ENCODE measurements at regions of chr7 and their contacts with region 1.

Region 1: DNA sequence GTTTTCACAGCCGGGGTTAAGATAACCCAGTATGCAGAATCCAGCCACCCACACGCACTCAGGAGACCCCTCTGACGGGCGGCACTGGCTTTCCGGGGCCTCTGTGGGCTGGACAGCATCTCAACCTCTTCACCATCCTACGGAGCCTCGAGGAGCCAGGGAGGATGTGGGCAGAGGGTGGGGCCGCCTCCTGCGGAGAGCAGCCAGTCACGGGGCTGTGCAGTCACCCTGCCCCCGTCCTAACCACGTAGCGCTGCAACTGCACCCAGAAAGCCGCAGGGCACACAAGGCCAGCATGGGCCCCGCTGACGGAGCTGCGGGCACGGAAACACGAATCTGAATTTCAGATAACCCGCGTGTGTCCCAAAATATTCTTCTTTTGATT is 270.3 kb downstream of the ELFN1 start:
- DNase-seq: peak; percentile 96
- H3K4me3 Mint-ChIP-seq: peak overlapping the region; percentile 84
- H3K27ac Mint-ChIP-seq: peak overlapping the region; percentile 96
- H3K4me1 Mint-ChIP-seq: peaks cover 55% of the 10 kb centered on the region
- H3K27me3 Mint-ChIP-seq: no peaks in the 10 kb centered on the region

Region 2: GRCh38 chr7:1925349-1925748 is 15.0 kb before region 1 on chr7:
- CTCF ChIA-PET with region 1: interaction called, 3 read pairs
- POLR2A ChIA-PET with region 1: interaction called, 10 read pairs
- intact Hi-C with region 1: loop called (anchors 1 kb)
- DNase-seq: peak; percentile 29
- H3K4me3 Mint-ChIP-seq: no peak overlapping the region
- H3K27ac Mint-ChIP-seq: no peak overlapping the region
- H3K4me1 Mint-ChIP-seq: peaks cover 70% of the 10 kb centered on the region
- H3K27me3 Mint-ChIP-seq: peaks cover 3% of the 10 kb centered on the region

Region 3: DNA sequence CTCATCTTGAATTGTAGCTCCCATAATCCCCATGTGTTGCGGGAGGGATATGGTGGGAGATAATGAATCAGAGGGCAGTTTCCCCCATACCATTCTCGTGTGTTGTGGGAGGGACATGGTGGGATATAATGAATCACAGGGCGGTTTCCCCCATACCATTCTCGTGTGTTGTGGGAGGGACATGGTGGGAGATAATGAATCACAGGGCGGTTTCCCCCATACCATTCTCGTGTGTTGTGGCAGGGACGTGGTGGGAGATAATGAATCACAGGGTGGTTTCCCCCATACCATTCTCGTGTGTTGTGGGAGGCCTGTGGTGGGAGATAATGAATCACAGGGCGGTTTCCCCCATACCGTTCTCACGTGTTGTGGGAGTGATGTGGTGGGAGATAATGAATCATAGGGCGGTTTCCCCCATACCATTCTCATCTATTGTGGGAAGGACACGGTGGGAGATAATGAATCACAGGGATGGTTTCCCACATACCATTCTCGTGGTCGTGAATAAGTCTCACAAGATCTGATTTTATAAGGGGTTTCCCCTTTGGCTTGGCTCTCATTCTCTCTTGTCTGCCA is 21.4 kb after region 1 on chr7:
- CTCF ChIA-PET with region 1: no interaction called
- POLR2A ChIA-PET with region 1: no interaction called
- intact Hi-C with region 1: loop called (anchors 1 kb)
- DNase-seq: peak; percentile 80
- H3K4me3 Mint-ChIP-seq: peak overlapping the region; percentile 43
- H3K27ac Mint-ChIP-seq: peak overlapping the region; percentile 84
- H3K4me1 Mint-ChIP-seq: peaks cover 5% of the 10 kb centered on the region
- H3K27me3 Mint-ChIP-seq: no peaks in the 10 kb centered on the region

Region 4: DNA sequence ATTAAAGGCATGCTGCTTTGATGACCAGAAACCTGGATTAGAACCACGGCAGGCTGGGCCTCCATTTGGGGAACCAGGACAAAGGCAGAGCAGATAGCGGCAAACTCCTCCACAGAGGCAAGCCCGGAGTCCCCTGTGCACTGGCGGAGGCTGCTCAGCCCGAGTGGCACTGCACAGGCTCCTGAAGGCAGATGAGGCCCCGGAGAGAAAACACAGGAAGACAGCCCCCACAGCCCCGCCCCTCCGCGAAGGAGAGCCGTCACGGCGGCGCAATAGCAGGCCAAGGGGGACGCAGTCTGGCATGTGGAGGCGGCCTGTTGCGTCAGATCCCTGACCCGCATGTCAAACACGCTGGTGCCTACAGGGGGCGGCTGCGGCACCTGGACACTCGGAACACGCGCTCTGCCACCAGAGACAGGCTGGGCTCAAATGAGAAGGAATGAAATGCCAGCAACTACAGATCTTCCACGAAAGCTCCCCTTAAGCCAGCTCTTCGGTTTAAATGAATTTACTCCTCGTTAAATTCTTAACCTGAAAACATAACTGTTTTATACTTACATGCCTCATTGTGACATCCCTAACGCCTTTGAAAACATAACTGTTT is 163.8 kb after region 1 on chr7:
- CTCF ChIA-PET with region 1: no interaction called
- POLR2A ChIA-PET with region 1: no interaction called
- intact Hi-C with region 1: no loop called
- DNase-seq: peak; percentile 84
- H3K4me3 Mint-ChIP-seq: no peak overlapping the region
- H3K27ac Mint-ChIP-seq: peak overlapping the region; percentile 42
- H3K4me1 Mint-ChIP-seq: peaks cover 23% of the 10 kb centered on the region
- H3K27me3 Mint-ChIP-seq: no peaks in the 10 kb centered on the region

Measured in activated CD4-positive, alpha-beta memory T cell treated with anti-CD3 and anti-CD28 coated beads for 36 hours (primary cell).